Heart right ventricle (tissue), 16 donors: ENCODE measurements at regions of chr9 and their contacts with region 1.

Region 1: DNA sequence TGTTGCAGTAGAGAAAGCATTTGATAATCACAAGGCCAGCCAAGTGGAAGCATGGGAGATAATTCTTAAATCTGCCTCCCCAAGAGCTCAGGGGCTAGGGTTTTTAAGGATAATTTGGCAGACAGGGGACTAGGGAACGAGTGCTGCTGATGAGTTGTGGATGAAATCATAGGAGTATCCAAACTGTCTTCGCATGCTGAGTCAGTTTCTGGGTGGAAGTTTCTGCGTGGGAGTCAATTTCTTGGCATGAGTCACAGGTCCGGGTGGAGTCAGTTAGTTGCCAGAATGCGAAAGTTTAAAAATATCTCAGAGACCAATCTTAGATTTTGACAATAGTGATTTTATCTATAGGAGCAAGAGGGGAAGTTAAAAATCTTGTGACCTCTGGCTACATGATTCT is 112.6 kb downstream of the TMC1 start:
- DNase-seq: peak in 1 of 2 donors; percentile 13
- ATAC-seq: peak in 4 of 8 donors; percentile 33 to 55 (median 47)
- H3K4me3 ChIP-seq: no peak overlapping the region
- H3K27ac ChIP-seq: no peak overlapping the region
- H3K4me1 ChIP-seq: peaks cover 0 to 11% (median 0%) of the 10 kb centered on the region in 9 donors
- H3K27me3 ChIP-seq: no peaks in the 10 kb centered on the region
- CTCF ChIP-seq: no peak

Region 2: GRCh38 chr9:72680593-72681282 is 46.8 kb after region 1 on chr9:
- intact Hi-C with region 1: loop called in 1 of 10 experiments (anchors 5 kb)
- DNase-seq: no peak
- ATAC-seq: no peak
- H3K4me3 ChIP-seq: no peak overlapping the region
- H3K27ac ChIP-seq: no peak overlapping the region
- H3K4me1 ChIP-seq: no peaks in the 10 kb centered on the region
- H3K27me3 ChIP-seq: no peaks in the 10 kb centered on the region
- CTCF ChIP-seq: no peak